CD4-positive, alpha-beta T cell (primary cell): ENCODE measurements at regions of chr14 and their contacts with region 1.

Region 1: DNA sequence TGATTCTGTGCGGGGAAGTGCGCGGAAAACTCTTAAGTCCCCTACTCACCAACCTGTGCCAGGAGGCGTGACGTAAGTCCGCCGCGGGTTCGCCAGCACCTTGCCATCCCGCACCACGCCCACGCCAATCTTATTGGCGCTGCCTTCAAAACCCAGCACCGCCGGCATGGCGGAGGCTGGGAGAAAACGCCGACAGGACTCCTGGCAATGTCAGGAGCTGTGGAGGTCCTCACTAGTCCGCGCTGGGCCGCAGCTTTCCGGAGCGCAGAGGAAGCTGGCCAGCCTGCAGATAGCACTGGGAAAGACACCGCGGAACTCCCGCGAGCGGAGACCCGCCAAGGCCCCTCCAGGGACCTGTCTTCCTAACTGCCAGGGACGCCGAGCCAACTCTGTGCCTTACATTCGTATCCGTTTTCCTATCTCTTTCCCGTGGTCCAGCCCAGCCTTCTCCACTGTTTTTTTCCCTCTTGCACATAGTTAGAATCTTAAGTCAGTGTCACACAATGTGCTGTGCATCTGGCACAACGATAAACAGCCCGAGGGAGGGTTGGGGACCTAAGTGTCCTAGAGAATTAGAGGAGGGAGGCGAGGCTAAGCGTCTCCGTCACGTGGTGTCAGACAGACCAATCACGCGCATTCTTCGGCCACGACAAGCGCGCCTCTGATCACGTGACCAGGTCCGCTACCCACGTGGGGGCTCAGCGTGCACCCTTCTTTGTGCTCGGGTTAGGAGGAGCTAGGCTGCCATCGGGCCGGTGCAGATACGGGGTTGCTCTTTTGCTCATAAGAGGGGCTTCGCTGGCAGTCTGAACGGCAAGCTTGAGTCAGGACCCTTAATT is at the starts of genes APEX1 and OSGEP:
- DNase-seq: peak; percentile 94 to 100 (median 97)
- ATAC-seq: peak; percentile 77
- H3K4me3 ChIP-seq: peak within 1 kb of the TSS; percentile 66
- H3K4me3 Mint-ChIP-seq: no peak within 1 kb of the TSS
- H3K27ac ChIP-seq: peak within 1 kb of the TSS; percentile 92 to 97
- H3K27ac Mint-ChIP-seq: no peak within 1 kb of the TSS
- H3K4me1 ChIP-seq: peaks cover 37% of the 10 kb centered on the region
- H3K4me1 Mint-ChIP-seq: peaks cover 6% of the 10 kb centered on the region
- H3K27me3 ChIP-seq: no peaks in the 10 kb centered on the region
- H3K27me3 Mint-ChIP-seq: no peaks in the 10 kb centered on the region
- CTCF ChIP-seq: no peak
- total RNA-seq, gene APEX1: 125 to 127 TPM
- total RNA-seq, gene OSGEP: 49.2 to 52.9 TPM

Region 2: GRCh38 chr14:20332788-20333493 is 121.8 kb before region 1 on chr14 and contains the start of gene CCNB1IP1:
- CTCF ChIA-PET with region 1: no interaction called
- POLR2A ChIA-PET with region 1: interaction called, 6 read pairs
- intact Hi-C with region 1: loop called (anchors 2 to 5 kb)
- DNase-seq: peak in 13 of 14 experiments; percentile 5 to 91 (median 26)
- ATAC-seq: peak; percentile 99
- H3K4me3 ChIP-seq: peak within 1 kb of the TSS; percentile 75
- H3K4me3 Mint-ChIP-seq: peak within 1 kb of the TSS; percentile 94
- H3K27ac ChIP-seq: peak within 1 kb of the TSS; percentile 3 to 59
- H3K27ac Mint-ChIP-seq: peak within 1 kb of the TSS; percentile 84
- H3K4me1 ChIP-seq: peaks cover 12% of the 10 kb centered on the region
- H3K4me1 Mint-ChIP-seq: peaks cover 34% of the 10 kb centered on the region
- H3K27me3 ChIP-seq: no peaks in the 10 kb centered on the region
- H3K27me3 Mint-ChIP-seq: no peaks in the 10 kb centered on the region
- CTCF ChIP-seq: no peak
- total RNA-seq, gene CCNB1IP1: 26.2 to 27.4 TPM

Region 3: DNA sequence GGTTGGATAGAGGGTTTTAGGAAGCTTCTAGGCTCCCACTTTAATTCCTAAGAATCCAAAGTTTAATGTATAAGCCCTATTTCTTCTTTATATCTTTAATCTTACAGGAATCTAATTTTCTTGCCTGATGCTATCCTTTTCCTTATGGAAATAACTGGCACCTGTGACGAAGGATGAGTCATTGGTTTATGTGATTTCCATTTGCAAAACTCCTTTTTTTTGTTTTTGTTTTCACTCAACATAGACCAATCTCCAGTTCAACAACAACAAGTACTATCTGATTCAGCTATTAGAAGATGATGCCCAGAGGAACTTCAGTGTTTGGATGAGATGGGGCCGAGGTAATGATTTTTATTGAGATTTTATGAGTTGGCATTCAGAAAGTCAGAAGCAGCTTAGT is 104.5 kb before region 1 on chr14:
- CTCF ChIA-PET with region 1: no interaction called
- POLR2A ChIA-PET with region 1: no interaction called
- intact Hi-C with region 1: loop called in 1 of 2 experiments (anchors 5 kb)
- DNase-seq: no peak
- ATAC-seq: no peak
- H3K4me3 ChIP-seq: no peak overlapping the region
- H3K4me3 Mint-ChIP-seq: no peak overlapping the region
- H3K27ac ChIP-seq: no peak overlapping the region
- H3K27ac Mint-ChIP-seq: no peak overlapping the region
- H3K4me1 ChIP-seq: no peaks in the 10 kb centered on the region
- H3K4me1 Mint-ChIP-seq: no peaks in the 10 kb centered on the region
- H3K27me3 ChIP-seq: no peaks in the 10 kb centered on the region
- H3K27me3 Mint-ChIP-seq: no peaks in the 10 kb centered on the region
- CTCF ChIP-seq: no peak

Region 4: GRCh38 chr14:20469242-20469889 is 14.6 kb after region 1 on chr14 and contains the start of gene PNP:
- CTCF ChIA-PET with region 1: interaction called, 7 read pairs
- POLR2A ChIA-PET with region 1: interaction called, 33 read pairs
- intact Hi-C with region 1: loop called (anchors 1 to 2 kb)
- DNase-seq: peak; percentile 77 to 96 (median 85)
- ATAC-seq: peak; percentile 88
- H3K4me3 ChIP-seq: peak within 1 kb of the TSS; percentile 95
- H3K4me3 Mint-ChIP-seq: peak within 1 kb of the TSS; percentile 98
- H3K27ac ChIP-seq: peak within 1 kb of the TSS; percentile 78 to 81
- H3K27ac Mint-ChIP-seq: peak within 1 kb of the TSS; percentile 92
- H3K4me1 ChIP-seq: peaks cover 46% of the 10 kb centered on the region
- H3K4me1 Mint-ChIP-seq: peaks cover 50% of the 10 kb centered on the region
- H3K27me3 ChIP-seq: no peaks in the 10 kb centered on the region
- H3K27me3 Mint-ChIP-seq: no peaks in the 10 kb centered on the region
- CTCF ChIP-seq: no peak
- total RNA-seq, gene PNP: 73.6 to 77.2 TPM

Region 5: DNA sequence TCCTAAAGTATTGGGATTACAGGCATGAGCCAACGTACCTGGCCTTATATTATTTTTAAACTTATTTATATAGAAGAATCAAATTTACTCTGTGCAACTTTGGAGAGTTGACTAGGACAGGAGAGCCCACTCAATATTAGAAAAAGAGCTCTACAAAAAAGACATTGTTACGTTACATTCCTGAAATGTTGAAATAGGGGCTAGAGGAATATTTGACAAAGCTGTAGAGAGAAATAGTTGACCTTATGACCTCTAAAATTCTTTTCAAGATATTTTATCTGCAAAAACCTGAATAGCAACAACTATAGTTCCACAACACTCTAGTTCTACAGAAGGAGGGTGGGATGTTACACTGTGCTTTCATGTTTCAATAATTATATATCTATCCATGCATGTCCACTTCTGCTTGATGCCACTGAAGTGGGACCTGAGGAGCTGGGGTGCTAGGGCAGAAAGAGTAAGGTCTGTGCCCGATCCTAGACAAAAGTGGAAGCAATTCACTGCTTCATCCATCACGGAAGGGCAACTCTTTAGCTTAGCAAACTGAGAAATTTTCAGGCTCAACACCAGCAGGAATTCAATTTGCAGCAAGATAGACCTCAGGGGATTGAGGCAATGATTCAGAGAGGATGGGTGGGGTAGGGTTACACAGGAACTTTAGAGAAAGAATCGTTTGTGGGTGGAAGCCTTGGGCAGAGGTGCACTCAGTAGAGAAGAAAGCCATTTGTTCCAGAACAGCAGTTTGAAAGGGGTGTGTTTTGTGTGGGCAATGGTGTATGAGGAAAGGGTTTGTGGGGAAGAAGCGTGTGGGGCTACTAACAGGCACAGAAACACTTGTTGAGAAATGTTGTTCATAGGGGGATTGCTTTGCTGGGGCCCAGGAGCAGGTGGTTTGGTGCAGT is 34.6 kb after region 1 on chr14:
- CTCF ChIA-PET with region 1: interaction called, 5 read pairs
- POLR2A ChIA-PET with region 1: interaction called, 19 read pairs
- intact Hi-C with region 1: no loop called
- DNase-seq: peak in 6 of 14 experiments; percentile 10 to 58 (median 14)
- ATAC-seq: peak; percentile 83
- H3K4me3 ChIP-seq: no peak overlapping the region
- H3K4me3 Mint-ChIP-seq: peak overlapping the region; percentile 69
- H3K27ac ChIP-seq: peak overlapping the region in 1 of 2 donors; percentile 19
- H3K27ac Mint-ChIP-seq: peak overlapping the region; percentile 84
- H3K4me1 ChIP-seq: peaks cover 58% of the 10 kb centered on the region
- H3K4me1 Mint-ChIP-seq: peaks cover 83% of the 10 kb centered on the region
- H3K27me3 ChIP-seq: no peaks in the 10 kb centered on the region
- H3K27me3 Mint-ChIP-seq: no peaks in the 10 kb centered on the region
- CTCF ChIP-seq: no peak